ENCODE measurements at regions of chr1 and their contacts with region 1.

Region 1: GRCh38 chr1:198829944-198830343 is 191.1 kb downstream of the PTPRC start:
- DNase-seq: no peak
- ATAC-seq: no peak
- H3K4me3 ChIP-seq: no peak overlapping the region
- H3K27ac ChIP-seq: no peak overlapping the region
- H3K4me1 ChIP-seq: no peaks in the 10 kb centered on the region
- H3K27me3 ChIP-seq: no peaks in the 10 kb centered on the region

Region 2: GRCh38 chr1:198771563-198772153 is 58.3 kb before region 1 on chr1:
- intact Hi-C with region 1: no loop called
- DNase-seq: no peak
- ATAC-seq: no peak
- H3K4me3 ChIP-seq: no peak overlapping the region
- H3K27ac ChIP-seq: no peak overlapping the region
- H3K4me1 ChIP-seq: no peaks in the 10 kb centered on the region
- H3K27me3 ChIP-seq: no peaks in the 10 kb centered on the region

Region 3: GRCh38 chr1:198880818-198881597 is 51.1 kb after region 1 on chr1:
- intact Hi-C with region 1: no loop called
- DNase-seq: no peak
- ATAC-seq: peak in 1 of 2 donors; percentile 73
- H3K4me3 ChIP-seq: no peak overlapping the region
- H3K27ac ChIP-seq: no peak overlapping the region
- H3K4me1 ChIP-seq: no peaks in the 10 kb centered on the region
- H3K27me3 ChIP-seq: no peaks in the 10 kb centered on the region

Region 4: GRCh38 chr1:198970912-198971311 is 141.0 kb after region 1 on chr1:
- intact Hi-C with region 1: no loop called
- DNase-seq: no peak
- ATAC-seq: no peak
- H3K4me3 ChIP-seq: no peak overlapping the region
- H3K27ac ChIP-seq: no peak overlapping the region
- H3K4me1 ChIP-seq: no peaks in the 10 kb centered on the region
- H3K27me3 ChIP-seq: no peaks in the 10 kb centered on the region

Region 5: DNA sequence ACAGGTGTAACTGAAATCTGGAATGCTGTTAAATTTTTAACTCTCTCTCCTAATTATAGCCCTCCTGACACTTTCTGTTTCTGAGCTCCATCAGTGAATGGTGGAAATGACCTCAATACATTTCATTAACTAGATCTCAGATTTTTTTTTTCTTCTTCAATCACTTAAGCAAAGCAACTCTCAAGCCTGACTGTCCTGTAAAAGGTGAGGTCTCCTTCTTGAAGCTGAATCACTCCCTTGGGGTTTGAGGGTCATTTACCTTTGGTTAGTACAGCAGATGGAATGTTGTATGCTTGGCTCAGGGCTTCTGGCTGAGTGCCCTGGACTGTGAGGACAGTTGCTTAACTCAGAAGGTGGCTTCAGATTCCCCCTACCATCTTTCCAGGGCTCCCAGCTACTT is 327.6 kb after region 1 on chr1:
- intact Hi-C with region 1: loop called in 1 of 4 experiments (anchors 5 kb)
- DNase-seq: no peak
- ATAC-seq: no peak
- H3K4me3 ChIP-seq: no peak overlapping the region
- H3K27ac ChIP-seq: no peak overlapping the region
- H3K4me1 ChIP-seq: no peaks in the 10 kb centered on the region
- H3K27me3 ChIP-seq: no peaks in the 10 kb centered on the region

Measured in right cardiac atrium (tissue), 5 donors.